ENCODE measurements at regions of chr12 and their contacts with region 1.

Region 1: DNA sequence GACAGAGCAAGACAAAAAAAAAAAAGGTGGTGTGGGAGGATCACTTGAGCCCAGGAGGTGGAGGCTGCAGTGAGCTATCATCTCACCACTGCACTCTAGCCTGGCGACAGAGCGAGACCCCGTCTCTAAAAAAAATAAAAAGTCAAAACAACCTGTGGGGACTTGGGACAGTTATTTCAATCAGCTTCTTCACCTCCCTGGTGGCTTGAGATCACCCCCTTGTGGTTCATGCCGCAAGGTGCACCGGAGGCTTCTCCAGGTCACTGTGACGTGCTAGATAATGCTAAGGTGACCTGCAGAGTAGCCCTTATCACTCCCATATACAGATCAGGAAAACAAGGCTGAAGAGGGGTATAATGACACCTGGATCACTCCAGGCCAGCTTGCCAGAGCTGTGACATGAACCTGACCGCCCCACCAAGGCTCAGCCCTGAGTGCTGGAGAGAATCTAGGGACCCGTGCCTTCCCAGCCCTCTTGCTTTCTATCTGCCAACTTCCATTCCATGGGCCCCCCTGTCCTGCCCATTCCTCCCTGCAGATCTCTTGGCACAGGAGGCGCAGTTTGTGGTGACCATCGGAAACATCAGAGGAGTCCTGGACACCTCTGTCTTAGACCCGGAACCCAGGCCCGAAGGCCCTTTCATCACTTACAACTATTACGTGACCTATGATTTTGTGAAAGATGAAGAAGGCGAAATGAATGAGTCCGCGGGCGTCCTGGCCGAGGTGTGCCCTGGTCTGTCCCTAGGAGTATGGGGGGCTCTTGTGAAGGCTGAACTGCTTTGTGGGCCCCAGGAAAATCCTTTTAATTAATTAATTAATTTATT is 8.1 kb downstream of the LRRC43 start:
- DNase-seq: peak; percentile 74 to 83 (median 79)
- ATAC-seq: peak; percentile 92
- H3K4me3 ChIP-seq: no peak overlapping the region
- H3K27ac ChIP-seq: no peak overlapping the region
- H3K4me1 ChIP-seq: no peaks in the 10 kb centered on the region
- H3K27me3 ChIP-seq: no peaks in the 10 kb centered on the region
- CTCF ChIP-seq: peak; percentile 69 to 88 (median 84)
- POLR2A ChIP-seq: no peak

Region 2: GRCh38 chr12:121925358-121925695 is 265.7 kb before region 1 on chr12:
- intact Hi-C with region 1: loop called (anchors 10 kb)
- DNase-seq: no peak
- ATAC-seq: no peak
- H3K4me3 ChIP-seq: no peak overlapping the region
- H3K27ac ChIP-seq: peak overlapping the region in 3 of 4 donors; percentile 36 to 58 (median 57)
- H3K4me1 ChIP-seq: peaks cover 3% of the 10 kb centered on the region
- H3K27me3 ChIP-seq: no peaks in the 10 kb centered on the region
- CTCF ChIP-seq: no peak
- POLR2A ChIP-seq: no peak

Region 3: GRCh38 chr12:122116707-122117535 is 74.1 kb before region 1 on chr12:
- intact Hi-C with region 1: no loop called
- DNase-seq: peak; percentile 49 to 72 (median 66)
- ATAC-seq: peak; percentile 68
- H3K4me3 ChIP-seq: no peak overlapping the region
- H3K27ac ChIP-seq: peak overlapping the region in 3 of 4 donors; percentile 48 to 60 (median 60)
- H3K4me1 ChIP-seq: peaks cover 58% of the 10 kb centered on the region
- H3K27me3 ChIP-seq: no peaks in the 10 kb centered on the region
- CTCF ChIP-seq: peak in 5 of 7 experiments; percentile 13 to 36 (median 26)
- POLR2A ChIP-seq: no peak

Measured in body of pancreas (tissue), 4 donors.